Activated T-helper 1 cell treated with anti-CD3 and anti-CD28 coated beads, Interleukin-12 subunit alpha, Interleukin-12 subunit beta, Interleukin-2, Interleukin-4 antibody, amounts not matched to agents 30 ng/mL and 10 ng/mL and 1 ng/mL, durations not matched to agents 14 hours and 24 hours and 36 hours (primary cell): ENCODE measurements at regions of chr19 and their contacts with region 1.

Region 1: DNA sequence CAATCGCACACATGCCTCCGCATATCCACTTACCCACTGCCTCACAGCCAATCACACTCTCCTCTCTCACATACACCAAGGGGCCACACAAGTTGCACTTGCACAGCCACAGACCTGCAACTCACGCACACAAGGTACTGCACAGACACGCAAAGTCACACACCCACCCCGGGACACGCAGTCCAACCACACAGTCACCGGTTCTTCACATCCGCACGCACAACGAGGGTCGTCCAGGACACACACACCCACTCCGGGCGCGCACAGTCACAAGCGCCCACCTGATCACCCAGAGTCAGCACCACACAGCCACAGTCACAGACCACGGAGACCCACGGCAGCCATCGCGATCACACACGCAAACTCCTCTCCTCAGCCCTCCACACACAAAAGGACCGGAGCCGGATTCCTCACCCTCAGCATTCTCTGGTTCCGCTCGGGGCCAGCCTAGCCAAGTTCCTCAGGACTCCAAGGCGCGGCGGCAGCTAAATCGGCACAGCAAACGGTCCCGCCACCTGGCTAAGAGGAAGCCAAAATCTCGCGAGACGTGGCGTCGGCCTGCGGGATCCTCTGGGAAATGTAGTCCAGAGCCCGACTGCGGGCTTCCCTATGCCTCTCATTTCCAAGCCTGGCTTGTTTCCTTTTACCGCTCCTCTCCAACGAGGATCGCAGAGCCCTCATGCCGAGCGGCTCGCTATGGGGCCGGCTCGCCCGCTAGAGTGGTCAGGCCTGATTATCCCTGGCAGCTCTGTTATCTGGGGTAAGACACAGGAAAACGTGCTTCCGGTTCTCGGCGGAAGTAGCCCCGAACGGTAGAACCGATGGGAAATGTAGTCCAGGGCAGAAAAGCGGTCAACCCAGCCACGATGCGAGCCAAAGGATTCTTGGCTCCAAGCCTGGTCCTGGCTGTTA is at the start of gene ZNF850:
- DNase-seq: peak; percentile 88
- H3K4me3 Mint-ChIP-seq: peak within 1 kb of the TSS; percentile 98
- H3K27ac Mint-ChIP-seq: peak within 1 kb of the TSS; percentile 93
- H3K4me1 Mint-ChIP-seq: peaks cover 18% of the 10 kb centered on the region
- H3K27me3 Mint-ChIP-seq: no peaks in the 10 kb centered on the region
- total RNA-seq, gene ZNF850: 3.2 and 3.7 TPM in 2 replicates

Region 2: DNA sequence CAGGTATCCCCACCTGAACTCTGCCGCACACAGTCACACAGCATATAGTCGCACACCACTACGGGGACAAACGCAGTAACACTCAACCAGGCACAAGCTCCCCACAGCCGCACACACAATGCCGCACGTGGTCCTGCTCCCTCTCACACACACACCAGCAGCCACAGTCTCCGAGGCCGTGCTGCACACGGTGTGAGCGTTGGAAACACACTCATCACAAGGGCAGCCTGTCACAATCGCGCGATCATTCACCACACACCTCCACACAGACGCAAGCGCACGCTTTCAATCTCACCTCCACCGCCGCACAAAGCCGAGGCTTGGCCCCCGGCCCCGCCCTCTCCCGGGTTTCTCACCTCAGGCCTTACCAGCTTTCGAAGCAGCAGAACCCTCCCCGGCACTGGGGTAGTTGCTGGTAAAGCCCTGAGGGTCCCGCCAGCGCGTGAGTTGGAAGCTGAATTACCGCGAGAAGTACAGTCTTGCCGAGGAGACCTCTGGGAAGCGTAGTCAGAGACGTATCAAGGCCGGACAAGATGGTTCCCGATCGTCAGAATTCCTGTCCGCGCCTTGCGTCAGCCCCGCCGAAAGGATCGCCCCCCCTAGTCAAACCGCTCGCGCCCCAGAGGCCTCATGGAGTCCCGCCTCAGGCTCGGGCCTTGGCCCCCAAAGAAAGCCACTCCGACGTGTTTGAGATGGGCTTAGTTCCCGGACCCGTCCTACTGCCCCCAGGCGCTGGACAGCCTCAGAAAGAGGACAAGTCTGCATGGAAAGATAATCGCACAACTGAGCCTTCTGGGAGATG is 283.2 kb before region 1 on chr19 and contains the start of gene ZNF566:
- intact Hi-C with region 1: loop called (anchors 1 kb)
- DNase-seq: peak; percentile 88
- H3K4me3 Mint-ChIP-seq: peak within 1 kb of the TSS; percentile 96
- H3K27ac Mint-ChIP-seq: peak within 1 kb of the TSS; percentile 97
- H3K4me1 Mint-ChIP-seq: peaks cover 18% of the 10 kb centered on the region
- H3K27me3 Mint-ChIP-seq: no peaks in the 10 kb centered on the region
- total RNA-seq, gene ZNF566: 6.9 and 8.7 TPM in 2 replicates

Region 3: DNA sequence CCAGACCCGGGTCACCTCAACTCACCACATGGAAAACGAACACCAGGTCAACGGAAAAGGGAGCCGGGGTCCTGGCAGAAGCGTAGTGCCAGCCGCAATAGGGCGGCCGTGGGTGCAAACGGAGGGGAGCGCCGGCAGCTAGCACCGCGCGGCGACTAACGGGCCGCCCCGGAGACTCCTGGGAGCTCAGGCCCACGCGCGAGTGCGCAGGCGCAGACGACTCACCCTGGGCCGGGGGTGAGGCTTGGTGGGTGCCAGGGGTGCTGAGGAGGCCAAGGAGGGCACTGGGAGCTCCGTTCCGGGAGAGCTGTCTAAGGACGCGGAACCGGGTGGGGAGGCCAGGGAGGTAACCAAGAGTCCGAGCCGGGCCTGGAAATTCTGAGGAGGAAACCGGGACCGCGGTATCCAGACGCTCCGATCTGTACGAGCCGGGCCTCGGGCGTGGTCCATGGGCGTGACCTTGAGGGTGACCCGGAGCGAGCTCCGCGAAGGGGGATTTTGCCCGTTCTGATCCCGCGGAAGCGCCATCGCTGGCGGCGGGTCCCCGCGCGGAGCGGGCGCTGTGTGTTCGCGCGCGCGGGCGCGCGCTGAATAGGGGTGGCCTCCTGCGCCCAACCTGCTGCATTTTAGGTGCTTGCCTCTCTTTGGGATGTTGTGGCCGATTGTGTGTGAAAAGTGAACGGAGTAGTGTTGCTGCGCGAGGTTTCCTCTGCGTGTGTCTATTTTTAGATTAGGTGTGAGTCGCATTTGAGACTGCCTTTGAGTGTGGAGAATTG is 167.3 kb before region 1 on chr19 and contains the start of gene ZNF382:
- intact Hi-C with region 1: loop called (anchors 1 kb)
- DNase-seq: peak; percentile 85
- H3K4me3 Mint-ChIP-seq: peak within 1 kb of the TSS; percentile 90
- H3K27ac Mint-ChIP-seq: peak within 1 kb of the TSS; percentile 95
- H3K4me1 Mint-ChIP-seq: peaks cover 26% of the 10 kb centered on the region
- H3K27me3 Mint-ChIP-seq: no peaks in the 10 kb centered on the region
- total RNA-seq, gene ZNF382: 10.2 and 10.8 TPM in 2 replicates

Region 4: GRCh38 chr19:36796076-36796992 is 23.8 kb after region 1 on chr19:
- intact Hi-C with region 1: loop called (anchors 1 kb)
- DNase-seq: no peak
- H3K4me3 Mint-ChIP-seq: peak overlapping the region; percentile 85
- H3K27ac Mint-ChIP-seq: no peak overlapping the region
- H3K4me1 Mint-ChIP-seq: no peaks in the 10 kb centered on the region
- H3K27me3 Mint-ChIP-seq: no peaks in the 10 kb centered on the region

Region 5: GRCh38 chr19:37077934-37078725 is 305.6 kb after region 1 on chr19 and contains the start of gene ZNF420:
- intact Hi-C with region 1: loop called (anchors 2 kb)
- DNase-seq: peak; percentile 85
- H3K4me3 Mint-ChIP-seq: peak within 1 kb of the TSS; percentile 93
- H3K27ac Mint-ChIP-seq: peak within 1 kb of the TSS; percentile 90
- H3K4me1 Mint-ChIP-seq: peaks cover 21% of the 10 kb centered on the region
- H3K27me3 Mint-ChIP-seq: no peaks in the 10 kb centered on the region
- total RNA-seq, gene ZNF420: 5.9 and 9.1 TPM in 2 replicates

Region 6: DNA sequence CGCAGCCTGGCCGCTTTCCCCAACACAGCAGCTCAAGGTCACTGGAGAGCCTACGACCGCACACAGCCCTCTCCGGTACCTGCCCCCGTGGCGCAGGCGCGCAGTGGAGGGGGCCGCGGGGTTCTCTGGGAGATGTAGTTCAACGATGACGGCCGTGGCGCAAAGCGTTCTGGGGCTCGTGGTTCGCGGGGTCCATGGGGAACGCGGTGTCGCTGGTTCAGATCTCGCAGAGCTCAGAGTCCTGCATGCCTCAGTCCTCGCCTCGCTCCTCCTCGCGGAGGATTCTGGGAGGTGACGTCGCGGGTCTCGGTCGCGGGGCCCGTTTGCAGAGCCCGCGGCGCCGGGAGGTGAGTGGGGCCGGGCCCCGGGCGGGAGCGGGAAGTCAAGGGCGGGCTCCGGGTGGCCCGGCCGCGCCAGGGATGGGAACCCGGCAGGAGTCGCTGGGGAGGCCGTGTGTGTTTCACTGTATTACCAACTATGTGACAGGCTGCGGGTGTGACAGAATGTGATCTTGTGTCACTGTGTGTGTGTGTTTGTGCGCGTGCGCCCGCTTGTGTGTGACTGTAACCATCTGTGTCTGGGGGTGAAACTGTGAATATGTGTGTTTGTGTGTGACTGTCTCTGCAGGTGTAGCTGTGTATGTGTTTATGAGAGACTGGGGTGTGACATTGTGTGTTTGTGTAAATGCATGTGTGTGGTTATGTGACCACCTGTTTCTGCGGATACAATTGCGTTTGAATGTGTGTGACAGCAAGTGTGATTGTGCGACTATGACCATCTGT is 598.5 kb after region 1 on chr19 and contains the start of gene ZNF527:
- intact Hi-C with region 1: loop called (anchors 1 kb)
- DNase-seq: peak; percentile 96
- H3K4me3 Mint-ChIP-seq: peak within 1 kb of the TSS; percentile 99
- H3K27ac Mint-ChIP-seq: peak within 1 kb of the TSS; percentile 87
- H3K4me1 Mint-ChIP-seq: peaks cover 13% of the 10 kb centered on the region
- H3K27me3 Mint-ChIP-seq: no peaks in the 10 kb centered on the region
- total RNA-seq, gene ZNF527: 3.9 and 4.5 TPM in 2 replicates